ENCODE measurements at regions of chr10 and their contacts with region 1.

Region 1: GRCh38 chr10:69318106-69318866 is 40.0 kb downstream of the HK1 start:
- DNase-seq: peak; percentile 62 to 94
- H3K4me3 ChIP-seq: peak overlapping the region; percentile 90 to 92
- H3K27ac ChIP-seq: peak overlapping the region; percentile 91 to 99
- H3K4me1 ChIP-seq: peaks cover 11 to 28% of the 10 kb centered on the region in 2 donors
- H3K27me3 ChIP-seq: no peaks in the 10 kb centered on the region
- CTCF ChIP-seq: no peak

Region 2: DNA sequence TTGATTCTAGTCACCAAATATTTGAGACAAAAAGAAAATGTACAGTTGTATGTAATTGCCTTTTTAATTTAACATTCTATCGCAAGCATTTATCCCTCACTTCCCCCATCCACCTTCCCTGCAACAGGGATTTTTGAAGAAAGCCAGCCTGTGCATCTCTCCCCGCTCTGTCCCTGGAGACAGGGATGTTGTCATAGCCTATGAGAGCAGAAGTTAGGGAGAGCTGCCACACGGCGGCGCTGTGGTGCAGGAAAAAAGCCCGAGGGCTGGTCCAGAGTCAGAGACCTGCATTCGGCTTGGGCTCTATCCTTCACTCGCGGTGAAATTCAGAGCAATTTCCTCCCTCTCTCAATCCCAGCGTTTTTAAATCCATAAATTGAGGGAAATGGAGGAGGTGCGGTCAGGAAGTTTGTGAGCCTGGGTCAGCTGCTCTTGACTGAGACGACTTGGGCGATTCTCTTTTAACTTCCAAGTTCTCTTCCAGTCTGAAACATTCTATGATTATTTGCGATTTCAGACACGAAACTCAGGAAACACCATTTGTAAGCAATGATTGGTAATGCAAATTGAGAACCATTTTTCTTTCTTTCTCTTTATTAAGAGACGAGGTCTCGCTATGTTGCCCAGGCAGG is 80.6 kb before region 1 on chr10:
- intact Hi-C with region 1: loop called (anchors 2 kb)
- DNase-seq: peak; percentile 40 to 90
- H3K4me3 ChIP-seq: no peak overlapping the region
- H3K27ac ChIP-seq: no peak overlapping the region
- H3K4me1 ChIP-seq: peaks cover 3 to 13% of the 10 kb centered on the region in 2 donors
- H3K27me3 ChIP-seq: no peaks in the 10 kb centered on the region
- CTCF ChIP-seq: peak; percentile 89 to 95 (median 91)

Region 3: GRCh38 chr10:69360485-69361324 is 42.4 kb after region 1 on chr10:
- intact Hi-C with region 1: loop called (anchors 1 kb)
- DNase-seq: peak; percentile 71 to 93
- H3K4me3 ChIP-seq: peak overlapping the region; percentile 6 to 41
- H3K27ac ChIP-seq: peak overlapping the region; percentile 95 to 96
- H3K4me1 ChIP-seq: peaks cover 25 to 58% of the 10 kb centered on the region in 2 donors
- H3K27me3 ChIP-seq: no peaks in the 10 kb centered on the region
- CTCF ChIP-seq: no peak

Region 4: GRCh38 chr10:69375307-69376151 is 57.2 kb after region 1 on chr10:
- intact Hi-C with region 1: loop called (anchors 5 kb)
- DNase-seq: peak in 1 of 2 donors; percentile 74
- H3K4me3 ChIP-seq: peak overlapping the region in 1 of 2 donors; percentile 42
- H3K27ac ChIP-seq: peak overlapping the region; percentile 71 to 75
- H3K4me1 ChIP-seq: peaks cover 11 to 25% of the 10 kb centered on the region in 2 donors
- H3K27me3 ChIP-seq: no peaks in the 10 kb centered on the region
- CTCF ChIP-seq: no peak

Region 5: DNA sequence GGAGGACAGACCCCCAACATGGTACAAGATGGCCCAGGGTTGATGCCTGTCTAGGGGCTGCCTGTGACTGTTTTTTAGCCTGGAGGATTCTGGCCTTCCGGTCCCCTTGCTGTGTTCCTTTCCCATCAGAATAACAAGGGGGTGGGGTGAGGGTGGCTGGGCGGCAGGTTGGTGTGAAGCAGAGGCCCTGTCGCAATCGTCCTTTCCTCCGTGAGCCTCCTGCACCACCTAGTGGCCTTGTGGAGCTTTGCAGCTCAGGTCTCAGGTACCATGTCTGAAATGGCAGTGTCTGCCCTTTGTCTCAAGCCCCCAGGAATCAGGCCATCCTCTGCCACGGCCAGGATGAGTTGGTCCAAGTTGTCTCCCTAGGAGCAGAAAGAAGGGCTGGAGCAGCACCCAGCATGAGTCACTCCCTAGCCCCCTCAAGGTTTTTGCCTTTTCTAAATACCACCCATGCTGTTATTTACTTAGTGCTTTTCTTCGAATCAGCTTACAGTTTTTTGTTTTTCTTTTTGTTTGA is 74.3 kb after region 1 on chr10:
- intact Hi-C with region 1: loop called (anchors 1 kb)
- DNase-seq: peak; percentile 64 to 93
- H3K4me3 ChIP-seq: no peak overlapping the region
- H3K27ac ChIP-seq: peak overlapping the region; percentile 30 to 52
- H3K4me1 ChIP-seq: peaks cover 0 to 18% of the 10 kb centered on the region in 2 donors
- H3K27me3 ChIP-seq: no peaks in the 10 kb centered on the region
- CTCF ChIP-seq: peak; percentile 93 to 97 (median 96)